A549 (cell line): ENCODE measurements at regions of chr6 and their contacts with region 1.

Region 1: GRCh38 chr6:133923938-133924593 is 29.0 kb upstream of the TBPL1 start:
- DNase-seq: peak; percentile 58 to 78
- ATAC-seq: peak; percentile 91 to 95
- H3K4me3 ChIP-seq: no peak overlapping the region
- H3K27ac ChIP-seq: no peak overlapping the region
- H3K4me1 ChIP-seq: no peaks in the 10 kb centered on the region
- CTCF ChIP-seq: peak; percentile 87
- EP300 ChIP-seq: no peak
- POLR2A ChIP-seq: no peak
- RAD21 ChIP-seq: peak; percentile 88 to 94

Region 2: DNA sequence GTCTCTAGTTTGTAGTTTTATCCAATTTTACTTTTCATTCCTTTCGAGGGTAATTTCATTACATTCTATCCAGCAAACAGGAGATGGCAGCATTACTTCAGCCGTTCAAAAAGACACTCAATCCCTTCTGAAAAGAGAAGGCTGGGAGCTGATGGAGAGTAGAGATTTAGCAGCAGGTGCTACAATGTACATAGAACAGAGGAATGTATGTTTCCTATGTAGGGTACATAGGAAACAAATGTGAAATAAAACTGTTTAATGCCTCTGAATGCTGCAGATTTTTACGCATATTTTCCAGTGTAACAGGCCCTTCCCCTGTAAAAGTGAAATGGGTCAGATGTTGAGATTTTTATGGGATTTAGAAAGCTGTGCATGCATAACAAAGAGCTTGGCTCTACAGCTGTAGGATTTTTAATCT is 1093.7 kb before region 1 on chr6:
- CTCF ChIA-PET with region 1: interaction called, 10 read pairs
- POLR2A ChIA-PET with region 1: no interaction called
- DNase-seq: peak in 1 of 2 experiments; percentile 35
- ATAC-seq: peak in 1 of 2 experiments; percentile 70; a peak in 2 of 6 replicates
- H3K4me3 ChIP-seq: no peak overlapping the region
- H3K27ac ChIP-seq: no peak overlapping the region
- H3K4me1 ChIP-seq: no peaks in the 10 kb centered on the region
- CTCF ChIP-seq: peak; percentile 65
- EP300 ChIP-seq: no peak
- POLR2A ChIP-seq: no peak
- RAD21 ChIP-seq: peak; percentile 79 to 80

Region 3: DNA sequence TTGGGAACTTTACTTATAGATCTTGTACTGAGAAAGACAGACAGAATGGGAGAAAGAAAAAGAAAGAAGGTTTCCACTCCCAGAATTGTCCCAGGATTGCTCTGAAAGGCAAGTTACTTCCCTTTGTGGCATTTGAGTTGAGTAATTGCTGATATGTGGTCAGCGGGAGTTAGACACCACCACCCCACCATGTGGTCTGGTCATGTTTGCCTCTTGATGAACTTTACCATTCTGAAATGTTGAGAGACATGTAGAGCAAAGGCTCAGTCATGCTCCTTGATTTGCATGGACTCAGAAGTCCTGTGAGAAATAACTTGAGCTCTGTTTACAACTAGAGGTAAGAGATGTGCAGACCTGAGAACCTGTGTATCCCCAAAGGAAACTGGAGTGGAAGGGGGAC is 18.0 kb before region 1 on chr6:
- CTCF ChIA-PET with region 1: interaction called, 10 read pairs
- POLR2A ChIA-PET with region 1: no interaction called
- DNase-seq: no peak
- ATAC-seq: no peak
- H3K4me3 ChIP-seq: no peak overlapping the region
- H3K27ac ChIP-seq: peak overlapping the region in 1 of 2 experiments; percentile 30; a peak in 2 of 6 replicates
- H3K4me1 ChIP-seq: no peaks in the 10 kb centered on the region
- CTCF ChIP-seq: no peak
- EP300 ChIP-seq: no peak
- POLR2A ChIP-seq: no peak
- RAD21 ChIP-seq: no peak

Region 4: GRCh38 chr6:133966654-133967329 is 42.7 kb after region 1 on chr6:
- CTCF ChIA-PET with region 1: interaction called, 11 read pairs
- POLR2A ChIA-PET with region 1: no interaction called
- DNase-seq: no peak
- ATAC-seq: no peak
- H3K4me3 ChIP-seq: no peak overlapping the region
- H3K27ac ChIP-seq: no peak overlapping the region
- H3K4me1 ChIP-seq: peaks cover 28% of the 10 kb centered on the region
- CTCF ChIP-seq: no peak
- EP300 ChIP-seq: no peak
- POLR2A ChIP-seq: no peak
- RAD21 ChIP-seq: no peak

Region 5: GRCh38 chr6:134097114-134097707 is 173.1 kb after region 1 on chr6:
- CTCF ChIA-PET with region 1: interaction called, 300 read pairs
- POLR2A ChIA-PET with region 1: interaction called, 3 read pairs
- DNase-seq: peak; percentile 58
- ATAC-seq: peak; percentile 59 to 70; a peak in 4 of 6 replicates
- H3K4me3 ChIP-seq: no peak overlapping the region
- H3K27ac ChIP-seq: no peak overlapping the region
- H3K4me1 ChIP-seq: no peaks in the 10 kb centered on the region
- CTCF ChIP-seq: peak; percentile 72
- EP300 ChIP-seq: no peak
- POLR2A ChIP-seq: no peak
- RAD21 ChIP-seq: peak; percentile 91

Region 6: DNA sequence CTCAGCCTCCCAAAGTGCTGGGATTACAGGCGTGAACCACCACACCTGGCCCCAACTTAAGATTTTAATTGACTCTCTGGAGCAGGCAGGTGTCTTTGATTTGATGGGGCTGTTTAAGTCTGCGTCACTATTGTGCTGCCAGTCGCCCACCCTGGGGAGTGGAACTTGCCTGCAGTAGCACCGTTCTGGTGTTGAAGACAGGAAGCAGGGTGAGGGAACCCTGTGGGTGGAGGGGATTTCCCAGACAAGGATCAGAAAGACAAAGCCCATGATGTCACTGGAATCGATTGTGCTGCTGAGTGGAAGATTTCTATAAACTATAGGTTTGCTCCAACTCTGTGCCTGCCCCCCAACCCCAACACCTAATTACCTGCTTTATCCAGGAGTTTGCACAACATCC is 1014.8 kb after region 1 on chr6:
- CTCF ChIA-PET with region 1: interaction called, 11 read pairs
- POLR2A ChIA-PET with region 1: no interaction called
- DNase-seq: no peak
- ATAC-seq: no peak
- H3K4me3 ChIP-seq: no peak overlapping the region
- H3K27ac ChIP-seq: peak overlapping the region in 1 of 2 experiments; percentile 49; a peak in 1 of 6 replicates
- H3K4me1 ChIP-seq: peaks cover 36% of the 10 kb centered on the region
- CTCF ChIP-seq: no peak
- EP300 ChIP-seq: no peak
- POLR2A ChIP-seq: no peak
- RAD21 ChIP-seq: no peak